AG04450 (cell line): ENCODE measurements at regions of chr14 and their contacts with region 1.

Region 1: GRCh38 chr14:100677554-100678468 is 48.9 kb upstream of the DLK1 start:
- DNase-seq: peak; percentile 24
- H3K4me3 ChIP-seq: no peak overlapping the region
- H3K27ac ChIP-seq: no peak overlapping the region
- H3K27me3 ChIP-seq: peaks cover 28% of the 10 kb centered on the region
- CTCF ChIP-seq: no peak

Region 2: DNA sequence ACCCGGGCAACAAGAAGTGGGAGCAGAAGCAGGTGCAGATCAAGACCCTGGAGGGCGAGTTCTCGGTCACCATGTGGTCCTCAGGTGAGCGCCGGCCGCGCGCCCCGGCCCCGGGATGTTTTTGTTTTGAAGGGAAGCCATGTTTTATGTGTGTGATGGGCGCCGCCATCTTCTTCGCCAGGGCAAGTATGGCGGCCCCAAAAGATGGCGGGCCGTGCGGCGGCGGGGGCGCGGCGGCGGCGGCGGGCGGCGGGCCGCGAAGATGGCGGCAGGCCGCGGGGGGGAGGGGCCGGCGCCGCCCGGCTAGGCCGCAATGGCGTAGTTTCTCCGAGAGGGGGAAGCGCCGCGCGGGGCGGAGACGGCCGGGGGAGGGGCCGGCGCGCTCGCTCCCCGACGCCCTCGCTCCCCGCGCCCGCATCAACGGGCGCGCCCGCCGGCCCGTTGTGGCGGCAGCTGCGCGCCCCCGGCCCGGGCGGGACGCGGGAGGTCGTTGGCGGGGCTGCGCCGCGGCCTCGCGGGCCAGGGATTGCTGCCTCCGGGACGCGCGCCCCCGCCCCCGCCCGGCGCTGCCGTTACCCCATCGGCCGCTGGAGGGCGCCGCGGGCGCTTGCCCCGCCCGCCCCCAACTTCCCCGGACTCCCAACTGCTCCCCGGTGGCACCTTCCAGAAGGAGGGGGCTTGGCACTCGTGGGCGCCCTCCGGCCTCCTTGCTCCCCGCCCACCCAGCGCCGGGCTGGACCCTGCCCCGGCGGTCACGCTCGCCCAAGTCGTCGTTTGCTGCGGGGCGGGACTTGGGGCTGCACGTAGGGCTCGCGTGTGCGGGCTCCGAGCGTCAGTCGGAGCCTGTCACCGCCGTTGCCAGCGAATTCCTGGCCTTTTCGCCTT is 437.7 kb before region 1 on chr14:
- CTCF ChIA-PET with region 1: no interaction called
- POLR2A ChIA-PET with region 1: no interaction called
- DNase-seq: peak; percentile 83
- H3K4me3 ChIP-seq: peak overlapping the region; percentile 91
- H3K27ac ChIP-seq: peak overlapping the region; percentile 81
- H3K27me3 ChIP-seq: no peaks in the 10 kb centered on the region
- CTCF ChIP-seq: peak; percentile 43

Region 3: DNA sequence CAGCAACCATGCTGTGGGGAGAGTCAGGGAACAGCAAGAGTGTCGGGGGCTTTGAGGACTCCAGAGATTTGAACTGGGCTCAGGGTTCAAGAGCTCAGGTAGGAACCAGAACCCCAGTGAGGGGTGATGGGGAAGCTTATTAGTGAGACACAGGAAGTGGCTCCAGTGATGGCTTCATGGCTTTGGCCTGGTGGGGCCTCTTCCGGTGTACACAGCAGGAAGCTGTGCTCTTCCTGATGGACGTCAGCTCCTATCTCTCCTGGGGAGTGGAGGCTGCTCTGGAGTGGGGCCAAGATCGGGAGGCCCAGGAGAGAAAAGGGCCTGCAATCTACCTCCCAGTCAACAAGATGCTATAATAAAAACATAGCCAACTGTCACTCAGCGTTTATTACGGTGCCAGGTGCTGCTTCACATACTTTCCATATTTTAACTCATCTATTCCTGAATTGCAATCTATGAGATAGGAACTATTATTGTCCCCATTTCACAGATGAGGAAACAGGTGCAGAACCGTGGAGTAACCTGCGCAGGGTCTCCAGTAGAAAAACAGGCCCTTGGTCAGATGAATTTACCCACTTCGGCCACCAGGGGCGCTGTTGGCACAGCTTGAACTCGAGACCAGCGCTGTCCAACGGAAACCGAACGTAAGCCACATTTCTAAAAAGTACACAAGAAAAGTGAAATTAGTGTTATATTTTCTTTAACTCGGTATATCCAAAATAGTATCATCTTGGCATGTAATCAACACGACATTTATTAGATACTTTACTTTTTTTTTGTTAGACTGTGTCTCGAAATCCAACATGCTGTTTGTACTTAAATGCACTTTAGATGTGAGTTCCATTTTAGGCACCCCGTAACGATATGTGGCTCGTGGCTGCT is 14.7 kb before region 1 on chr14:
- CTCF ChIA-PET with region 1: interaction called, 16 read pairs
- POLR2A ChIA-PET with region 1: no interaction called
- DNase-seq: no peak
- H3K4me3 ChIP-seq: no peak overlapping the region
- H3K27ac ChIP-seq: no peak overlapping the region
- H3K27me3 ChIP-seq: peaks cover 19% of the 10 kb centered on the region
- CTCF ChIP-seq: peak; percentile 85